Activated CD4-positive, alpha-beta T cell treated with anti-CD3 and anti-CD28 coated beads for 36 hours (primary cell): ENCODE measurements at regions of chr1 and their contacts with region 1.

Region 1: GRCh38 chr1:108512239-108512981 is 47.5 kb upstream of the EEIG2 start:
- DNase-seq: no peak
- ATAC-seq: no peak
- H3K4me3 Mint-ChIP-seq: no peak overlapping the region
- H3K27ac Mint-ChIP-seq: no peak overlapping the region
- H3K4me1 Mint-ChIP-seq: no peaks in the 10 kb centered on the region
- H3K27me3 Mint-ChIP-seq: peaks cover 22% of the 10 kb centered on the region

Region 2: GRCh38 chr1:107804134-107804533 is 708.3 kb before region 1 on chr1:
- CTCF ChIA-PET with region 1: no interaction called
- POLR2A ChIA-PET with region 1: no interaction called
- intact Hi-C with region 1: no loop called
- DNase-seq: no peak
- ATAC-seq: peak; percentile 74
- H3K4me3 Mint-ChIP-seq: no peak overlapping the region
- H3K27ac Mint-ChIP-seq: peak overlapping the region; percentile 5
- H3K4me1 Mint-ChIP-seq: peaks cover 33% of the 10 kb centered on the region
- H3K27me3 Mint-ChIP-seq: no peaks in the 10 kb centered on the region

Region 3: GRCh38 chr1:108199781-108200570 is 312.4 kb before region 1 on chr1 and contains the start of gene SLC25A24:
- CTCF ChIA-PET with region 1: no interaction called
- POLR2A ChIA-PET with region 1: no interaction called
- intact Hi-C with region 1: loop called in 1 of 2 experiments (anchors 5 kb)
- DNase-seq: peak; percentile 86
- ATAC-seq: peak; percentile 97
- H3K4me3 Mint-ChIP-seq: peak within 1 kb of the TSS; percentile 84
- H3K27ac Mint-ChIP-seq: peak within 1 kb of the TSS; percentile 78
- H3K4me1 Mint-ChIP-seq: peaks cover 26% of the 10 kb centered on the region
- H3K27me3 Mint-ChIP-seq: no peaks in the 10 kb centered on the region
- total RNA-seq, gene SLC25A24: 13.6 to 15.4 TPM

Region 4: GRCh38 chr1:108527837-108528236 is 15.4 kb after region 1 on chr1:
- CTCF ChIA-PET with region 1: interaction called, 12 read pairs
- POLR2A ChIA-PET with region 1: no interaction called
- intact Hi-C with region 1: no loop called
- DNase-seq: no peak
- ATAC-seq: no peak
- H3K4me3 Mint-ChIP-seq: no peak overlapping the region
- H3K27ac Mint-ChIP-seq: no peak overlapping the region
- H3K4me1 Mint-ChIP-seq: no peaks in the 10 kb centered on the region
- H3K27me3 Mint-ChIP-seq: peaks cover 3% of the 10 kb centered on the region

Region 5: DNA sequence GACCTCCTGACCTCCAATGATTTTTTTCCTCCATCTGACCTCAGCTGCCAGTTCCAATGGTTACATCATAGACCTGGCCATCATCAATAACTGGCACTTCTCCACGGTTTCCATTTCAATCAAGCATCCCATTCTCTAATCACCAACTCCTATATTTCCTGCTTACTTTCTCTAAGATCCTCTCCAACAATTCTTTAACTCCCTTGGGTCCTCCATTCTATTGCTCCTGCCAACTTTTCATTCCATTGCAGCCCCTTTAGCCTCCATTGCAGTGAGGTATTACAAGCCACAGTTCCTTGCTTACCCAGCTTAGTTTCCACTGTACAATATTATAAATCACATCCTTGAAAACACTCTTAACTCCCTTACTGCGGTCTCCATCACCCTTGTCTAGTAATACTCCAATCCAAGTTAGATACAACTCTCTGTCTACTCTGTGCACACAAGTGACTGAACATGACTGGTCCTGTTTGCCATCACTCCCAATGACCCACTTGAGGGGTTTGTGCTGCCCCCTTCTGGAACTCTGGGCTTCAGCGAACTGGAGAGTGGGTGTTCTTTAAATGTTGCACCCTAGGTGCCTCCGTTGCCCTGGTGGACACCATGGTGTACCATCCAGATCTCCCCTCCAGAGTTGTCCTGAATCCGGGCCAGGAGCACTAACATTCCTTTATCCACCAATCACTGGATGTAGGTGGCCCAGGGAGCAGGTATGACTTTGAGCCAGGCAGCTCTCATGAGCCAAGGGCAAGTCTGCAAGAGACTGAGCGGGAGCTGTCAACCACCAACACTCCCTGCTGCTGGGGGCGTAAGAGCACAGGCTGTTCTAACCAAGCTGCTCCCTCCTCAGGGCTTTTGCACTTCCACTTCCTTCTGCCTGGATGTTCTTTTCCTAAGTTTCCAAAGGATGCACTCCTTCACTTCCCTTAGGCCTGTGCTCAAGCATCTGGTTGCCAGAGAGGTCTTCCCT is 196.6 kb after region 1 on chr1:
- CTCF ChIA-PET with region 1: interaction called, 6 read pairs
- POLR2A ChIA-PET with region 1: no interaction called
- intact Hi-C with region 1: loop called (anchors 2 to 10 kb)
- DNase-seq: peak; percentile 78
- ATAC-seq: peak; percentile 86
- H3K4me3 Mint-ChIP-seq: no peak overlapping the region
- H3K27ac Mint-ChIP-seq: no peak overlapping the region
- H3K4me1 Mint-ChIP-seq: peaks cover 25% of the 10 kb centered on the region
- H3K27me3 Mint-ChIP-seq: no peaks in the 10 kb centered on the region

Region 6: GRCh38 chr1:108881369-108881768 is 369.0 kb after region 1 on chr1:
- CTCF ChIA-PET with region 1: no interaction called
- POLR2A ChIA-PET with region 1: no interaction called
- intact Hi-C with region 1: no loop called
- DNase-seq: no peak
- ATAC-seq: no peak
- H3K4me3 Mint-ChIP-seq: no peak overlapping the region
- H3K27ac Mint-ChIP-seq: no peak overlapping the region
- H3K4me1 Mint-ChIP-seq: peaks cover 5% of the 10 kb centered on the region
- H3K27me3 Mint-ChIP-seq: peaks cover 3% of the 10 kb centered on the region

Region 7: GRCh38 chr1:108897865-108898720 is 385.7 kb after region 1 on chr1:
- CTCF ChIA-PET with region 1: interaction called, 7 read pairs
- POLR2A ChIA-PET with region 1: no interaction called
- intact Hi-C with region 1: loop called (anchors 1 to 5 kb)
- DNase-seq: peak; percentile 24
- ATAC-seq: peak; percentile 70
- H3K4me3 Mint-ChIP-seq: no peak overlapping the region
- H3K27ac Mint-ChIP-seq: no peak overlapping the region
- H3K4me1 Mint-ChIP-seq: no peaks in the 10 kb centered on the region
- H3K27me3 Mint-ChIP-seq: no peaks in the 10 kb centered on the region